HCT116 (cell line): ENCODE measurements at regions of chr11 and their contacts with region 1.

Region 1: GRCh38 chr11:68517121-68517741 is 56.7 kb downstream of the PPP6R3 start:
- DNase-seq: no peak
- ATAC-seq: no peak
- H3K4me3 ChIP-seq: no peak overlapping the region
- H3K27ac ChIP-seq: no peak overlapping the region
- H3K4me1 ChIP-seq: no peaks in the 10 kb centered on the region
- H3K27me3 ChIP-seq: no peaks in the 10 kb centered on the region
- CTCF ChIP-seq: no peak
- POLR2A ChIP-seq: no peak
- RAD21 ChIP-seq: no peak

Region 2: GRCh38 chr11:68257475-68258362 is 259.5 kb before region 1 on chr11:
- CTCF ChIA-PET with region 1: no interaction called
- POLR2A ChIA-PET with region 1: no interaction called
- RAD21 ChIA-PET with region 1: no interaction called
- intact Hi-C with region 1: no loop called
- DNase-seq: peak; percentile 81
- ATAC-seq: peak; percentile 88
- H3K4me3 ChIP-seq: 0 out of 4 replicates have a peak overlapping the region, but pooled peaks of 1 of the 2 experiments have one; percentile 18
- H3K27ac ChIP-seq: no peak overlapping the region
- H3K4me1 ChIP-seq: peaks cover 3 to 17% of the 10 kb centered on the region in 2 experiments; a peak in 3 of 4 replicates
- H3K27me3 ChIP-seq: no peaks in the 10 kb centered on the region
- CTCF ChIP-seq: peak; percentile 79 to 94 (median 81)
- POLR2A ChIP-seq: no peak
- RAD21 ChIP-seq: peak; percentile 99

Region 3: DNA sequence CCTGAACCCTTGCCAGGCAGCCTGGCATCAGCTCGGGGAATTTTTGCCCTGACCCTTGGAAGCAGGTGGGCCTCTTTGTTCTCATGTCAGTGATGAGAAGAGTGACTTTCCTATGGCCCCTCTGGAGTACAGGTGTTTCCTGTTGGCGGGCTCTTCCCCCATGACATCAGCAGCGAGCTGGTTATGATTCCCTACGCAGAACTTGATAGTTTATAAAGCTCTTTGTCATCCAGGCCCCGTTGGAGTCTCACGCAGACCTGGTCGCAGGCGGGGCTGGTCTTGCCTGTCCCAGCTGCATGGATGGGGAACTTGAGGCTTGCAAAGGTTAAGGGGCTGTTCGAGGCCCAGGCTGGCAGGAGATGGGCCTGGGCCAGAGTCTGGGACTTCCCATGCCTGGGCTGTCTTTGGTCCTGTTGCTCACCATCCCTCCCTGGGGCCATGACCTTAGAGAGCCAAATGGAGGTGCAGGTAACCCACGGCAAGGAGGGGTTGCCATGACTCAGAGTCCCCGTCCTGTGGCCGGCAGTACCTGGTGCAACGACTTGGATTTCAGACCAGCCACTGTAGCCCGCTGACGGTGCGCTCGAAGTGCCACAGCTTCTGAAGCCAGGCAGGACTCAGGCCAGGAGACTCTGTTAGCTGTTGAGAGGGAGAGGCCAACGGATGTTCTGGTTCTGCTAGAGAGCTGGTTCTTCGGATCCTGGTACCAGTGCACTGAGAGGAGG is 102.6 kb before region 1 on chr11:
- CTCF ChIA-PET with region 1: no interaction called
- POLR2A ChIA-PET with region 1: no interaction called
- RAD21 ChIA-PET with region 1: no interaction called
- intact Hi-C with region 1: no loop called
- DNase-seq: no peak
- ATAC-seq: no peak
- H3K4me3 ChIP-seq: no peak overlapping the region
- H3K27ac ChIP-seq: no peak overlapping the region
- H3K4me1 ChIP-seq: no peaks in the 10 kb centered on the region
- H3K27me3 ChIP-seq: no peaks in the 10 kb centered on the region
- CTCF ChIP-seq: no peak
- POLR2A ChIP-seq: no peak
- RAD21 ChIP-seq: no peak

Region 4: DNA sequence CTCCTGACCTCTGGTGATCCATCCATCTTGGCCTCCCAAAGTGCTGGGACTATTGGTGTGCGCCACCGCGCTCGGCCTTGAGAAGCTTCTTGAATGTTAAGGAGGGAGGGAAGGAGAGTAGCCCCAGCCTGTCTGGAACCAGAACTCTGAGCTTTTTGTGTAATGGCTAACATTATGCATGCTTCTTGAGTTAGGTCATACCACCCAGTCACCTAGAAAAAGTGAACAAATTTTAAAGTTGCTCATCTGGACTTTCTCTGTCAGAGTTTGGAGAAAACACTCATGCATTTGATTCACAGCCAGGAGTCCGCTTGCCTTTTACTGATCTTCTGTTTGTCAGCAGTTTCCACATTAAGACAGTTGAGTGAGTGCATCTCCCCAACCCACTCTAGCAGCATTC is 25.4 kb after region 1 on chr11:
- CTCF ChIA-PET with region 1: no interaction called
- POLR2A ChIA-PET with region 1: no interaction called
- RAD21 ChIA-PET with region 1: no interaction called
- intact Hi-C with region 1: no loop called
- DNase-seq: no peak
- ATAC-seq: no peak
- H3K4me3 ChIP-seq: no peak overlapping the region
- H3K27ac ChIP-seq: no peak overlapping the region
- H3K4me1 ChIP-seq: peaks cover 11 to 23% of the 10 kb centered on the region in 2 experiments
- H3K27me3 ChIP-seq: no peaks in the 10 kb centered on the region
- CTCF ChIP-seq: no peak
- POLR2A ChIP-seq: no peak
- RAD21 ChIP-seq: no peak

Region 5: GRCh38 chr11:68598816-68599653 is 81.8 kb after region 1 on chr11:
- CTCF ChIA-PET with region 1: no interaction called
- POLR2A ChIA-PET with region 1: no interaction called
- RAD21 ChIA-PET with region 1: no interaction called
- intact Hi-C with region 1: no loop called
- DNase-seq: no peak
- ATAC-seq: no peak
- H3K4me3 ChIP-seq: no peak overlapping the region
- H3K27ac ChIP-seq: no peak overlapping the region
- H3K4me1 ChIP-seq: no peaks in the 10 kb centered on the region
- H3K27me3 ChIP-seq: no peaks in the 10 kb centered on the region
- CTCF ChIP-seq: no peak
- POLR2A ChIP-seq: no peak
- RAD21 ChIP-seq: no peak

Region 6: DNA sequence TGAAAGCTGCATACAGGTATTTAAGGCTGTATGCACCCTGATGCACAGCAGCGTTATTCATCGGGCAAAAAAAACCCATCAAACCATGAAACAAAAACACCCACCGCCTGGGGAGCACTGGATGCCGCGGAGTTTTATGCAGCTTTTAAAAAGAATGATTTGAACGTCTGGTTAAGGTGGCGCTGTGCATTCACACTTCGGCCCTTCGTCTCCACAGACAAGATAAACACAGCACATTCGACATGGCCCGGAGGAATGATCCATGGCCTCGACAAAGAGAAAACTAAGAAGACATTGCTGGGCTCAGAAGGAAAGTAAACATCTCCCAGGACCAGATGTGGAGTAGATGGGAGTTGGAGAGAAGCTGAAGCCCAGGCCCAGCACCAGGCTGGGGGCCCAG is 126.4 kb after region 1 on chr11:
- CTCF ChIA-PET with region 1: interaction called, 11 read pairs
- POLR2A ChIA-PET with region 1: no interaction called
- RAD21 ChIA-PET with region 1: interaction called in 1 of 2 experiments, 6 read pairs
- intact Hi-C with region 1: no loop called
- DNase-seq: peak; percentile 8
- ATAC-seq: peak; percentile 67
- H3K4me3 ChIP-seq: no peak overlapping the region
- H3K27ac ChIP-seq: no peak overlapping the region
- H3K4me1 ChIP-seq: no peaks in the 10 kb centered on the region
- H3K27me3 ChIP-seq: no peaks in the 10 kb centered on the region
- CTCF ChIP-seq: peak in 2 of 3 experiments; percentile 7 to 41; a peak in 1 of 6 replicates
- POLR2A ChIP-seq: no peak
- RAD21 ChIP-seq: peak; percentile 57